Panc1 (cell line): ENCODE measurements at regions of chr9 and their contacts with region 1.

Region 1: GRCh38 chr9:130518233-130518632 is 61.1 kb upstream of the FUBP3 start:
- DNase-seq: no peak
- ATAC-seq: no peak
- H3K4me3 ChIP-seq: no peak overlapping the region
- H3K27ac ChIP-seq: no peak overlapping the region
- H3K4me1 ChIP-seq: no peaks in the 10 kb centered on the region
- H3K27me3 ChIP-seq: no peaks in the 10 kb centered on the region
- CTCF ChIP-seq: no peak

Region 2: DNA sequence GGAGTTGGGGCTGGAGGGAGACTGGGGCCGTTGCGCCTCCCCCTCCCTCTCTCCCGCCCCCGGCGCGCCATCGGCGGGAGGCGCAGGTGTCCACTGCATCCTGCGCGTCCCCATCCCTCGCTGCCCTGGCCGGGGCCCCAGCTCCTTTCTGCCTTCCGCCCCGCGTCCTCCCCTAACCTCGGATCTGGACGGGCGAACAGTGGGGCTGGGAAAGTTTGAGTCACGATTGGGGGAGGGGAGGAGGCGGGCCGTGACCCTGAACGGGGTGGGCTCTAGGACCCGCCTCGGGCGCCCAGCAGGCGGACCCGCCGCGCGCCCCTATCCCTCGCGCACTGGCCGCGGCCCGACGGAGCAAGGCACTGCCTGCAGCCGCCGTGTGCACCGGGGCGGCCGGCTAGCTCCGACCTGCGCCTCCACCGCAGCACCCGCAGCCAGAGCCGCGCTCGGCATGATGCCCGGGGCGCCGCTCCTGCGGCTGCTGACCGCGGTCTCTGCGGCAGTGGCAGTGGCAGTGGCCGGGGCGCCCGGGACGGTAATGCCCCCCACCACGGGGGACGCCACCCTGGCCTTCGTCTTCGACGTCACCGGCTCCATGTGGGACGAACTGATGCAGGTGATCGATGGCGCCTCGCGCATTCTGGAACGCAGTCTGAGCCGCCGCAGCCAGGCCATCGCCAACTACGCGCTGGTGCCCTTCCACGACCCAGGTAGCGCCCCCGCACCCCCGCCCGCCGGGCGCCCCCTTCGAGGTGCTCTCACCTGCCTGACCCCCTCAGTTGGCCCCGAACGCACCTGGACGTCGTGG is 252.6 kb before region 1 on chr9 and contains the start of gene HMCN2:
- CTCF ChIA-PET with region 1: no interaction called
- POLR2A ChIA-PET with region 1: no interaction called
- in situ Hi-C with region 1: no loop called
- intact Hi-C with region 1: no loop called
- DNase-seq: no peak
- ATAC-seq: peak; percentile 78
- H3K4me3 ChIP-seq: no peak within 1 kb of the TSS
- H3K27ac ChIP-seq: no peak within 1 kb of the TSS
- H3K4me1 ChIP-seq: peaks cover 3% of the 10 kb centered on the region; the same call in 1 of the 2 replicates
- H3K27me3 ChIP-seq: no peaks in the 10 kb centered on the region
- CTCF ChIP-seq: no peak
- total RNA-seq, gene HMCN2: 0.05 TPM

Region 3: GRCh38 chr9:130414910-130415746 is 103.1 kb before region 1 on chr9:
- CTCF ChIA-PET with region 1: no interaction called
- POLR2A ChIA-PET with region 1: no interaction called
- in situ Hi-C with region 1: no loop called
- intact Hi-C with region 1: no loop called
- DNase-seq: no peak
- ATAC-seq: no peak
- H3K4me3 ChIP-seq: no peak overlapping the region
- H3K27ac ChIP-seq: no peak overlapping the region
- H3K4me1 ChIP-seq: no peaks in the 10 kb centered on the region
- H3K27me3 ChIP-seq: no peaks in the 10 kb centered on the region
- CTCF ChIP-seq: no peak

Region 4: DNA sequence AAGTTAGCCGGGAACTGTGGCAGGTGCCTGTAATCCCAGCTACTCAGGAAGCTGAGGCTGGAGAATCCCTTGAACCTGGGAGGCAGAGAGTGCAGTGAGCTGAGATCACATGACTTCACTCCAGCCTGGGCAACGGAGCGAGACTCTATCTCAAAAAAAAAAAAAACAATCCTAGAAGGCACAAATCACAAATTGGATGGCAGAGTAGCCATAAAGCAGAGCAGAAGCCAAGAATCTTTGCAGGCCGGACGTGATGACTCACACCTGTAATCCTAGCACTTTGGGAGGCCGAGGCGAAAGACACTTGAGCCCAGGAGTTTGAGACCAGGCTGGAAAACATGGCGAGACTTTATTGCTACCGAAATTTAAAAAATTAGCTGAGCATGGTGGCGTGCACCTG is 52.0 kb after region 1 on chr9:
- CTCF ChIA-PET with region 1: no interaction called
- POLR2A ChIA-PET with region 1: interaction called, 11 read pairs
- in situ Hi-C with region 1: no loop called
- intact Hi-C with region 1: no loop called
- DNase-seq: no peak
- ATAC-seq: 0 out of 2 replicates have a peak, but pooled peaks have one; percentile 34
- H3K4me3 ChIP-seq: no peak overlapping the region
- H3K27ac ChIP-seq: no peak overlapping the region
- H3K4me1 ChIP-seq: no peaks in the 10 kb centered on the region
- H3K27me3 ChIP-seq: no peaks in the 10 kb centered on the region
- CTCF ChIP-seq: no peak